Ovary (tissue), 10 donors: ENCODE measurements at regions of chr2 and their contacts with region 1.

Region 1: DNA sequence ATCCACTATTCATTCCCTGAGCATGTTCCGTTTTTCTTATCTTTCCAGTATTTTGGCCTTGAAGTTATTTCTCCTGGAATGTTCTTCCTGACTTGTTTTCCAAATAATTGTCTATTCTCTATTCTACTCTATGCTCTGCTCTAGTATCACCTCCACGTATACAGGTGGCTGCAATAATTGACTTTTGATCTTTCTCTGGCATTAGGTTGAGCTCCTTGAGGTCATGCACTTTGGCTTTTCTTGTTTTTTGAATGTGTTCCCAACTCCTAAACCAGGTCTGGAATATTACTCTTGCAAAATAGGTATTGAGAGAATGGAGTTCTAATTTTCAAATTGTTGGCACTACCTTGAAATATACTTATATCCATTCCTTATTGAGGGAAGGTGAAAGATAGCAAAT is 550.4 kb downstream of the CNTNAP5 start:
- DNase-seq: no peak
- H3K4me3 ChIP-seq: no peak overlapping the region
- H3K27ac ChIP-seq: no peak overlapping the region
- H3K4me1 ChIP-seq: no peaks in the 10 kb centered on the region
- H3K27me3 ChIP-seq: no peaks in the 10 kb centered on the region
- CTCF ChIP-seq: no peak
- EP300 ChIP-seq: no peak
- POLR2A ChIP-seq: no peak

Region 2: DNA sequence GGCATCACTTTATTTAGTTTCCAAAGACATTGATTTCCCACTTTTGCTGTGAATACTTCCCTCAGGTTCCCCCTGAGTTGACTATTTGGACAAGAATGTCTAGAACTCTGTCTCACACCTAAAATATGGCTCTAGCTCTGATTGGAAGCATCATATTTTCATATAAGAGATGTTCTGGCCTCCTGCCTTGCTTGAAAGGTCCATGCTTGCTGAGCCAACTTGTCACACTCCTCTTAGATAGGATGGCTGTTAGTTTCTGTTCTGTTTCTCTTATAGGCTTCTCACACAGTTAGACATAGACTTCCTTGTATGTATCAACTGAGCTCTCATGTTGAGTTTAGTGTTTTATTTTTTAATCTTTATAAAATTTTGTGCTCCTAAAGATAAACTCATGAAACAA is 463.3 kb before region 1 on chr2:
- intact Hi-C with region 1: no loop called
- DNase-seq: no peak
- H3K4me3 ChIP-seq: no peak overlapping the region
- H3K27ac ChIP-seq: no peak overlapping the region
- H3K4me1 ChIP-seq: no peaks in the 10 kb centered on the region
- H3K27me3 ChIP-seq: no peaks in the 10 kb centered on the region
- CTCF ChIP-seq: no peak
- EP300 ChIP-seq: no peak
- POLR2A ChIP-seq: no peak

Region 3: GRCh38 chr2:124524155-124524915 is 51.2 kb before region 1 on chr2:
- intact Hi-C with region 1: no loop called
- DNase-seq: no peak
- H3K4me3 ChIP-seq: no peak overlapping the region
- H3K27ac ChIP-seq: no peak overlapping the region
- H3K4me1 ChIP-seq: no peaks in the 10 kb centered on the region
- H3K27me3 ChIP-seq: no peaks in the 10 kb centered on the region
- CTCF ChIP-seq: no peak
- EP300 ChIP-seq: no peak
- POLR2A ChIP-seq: no peak

Region 4: GRCh38 chr2:124542932-124543640 is 32.4 kb before region 1 on chr2:
- intact Hi-C with region 1: loop called in 1 of 4 experiments (anchors 1 kb)
- DNase-seq: no peak
- H3K4me3 ChIP-seq: no peak overlapping the region
- H3K27ac ChIP-seq: no peak overlapping the region
- H3K4me1 ChIP-seq: no peaks in the 10 kb centered on the region
- H3K27me3 ChIP-seq: no peaks in the 10 kb centered on the region
- CTCF ChIP-seq: no peak
- EP300 ChIP-seq: no peak
- POLR2A ChIP-seq: no peak

Region 5: DNA sequence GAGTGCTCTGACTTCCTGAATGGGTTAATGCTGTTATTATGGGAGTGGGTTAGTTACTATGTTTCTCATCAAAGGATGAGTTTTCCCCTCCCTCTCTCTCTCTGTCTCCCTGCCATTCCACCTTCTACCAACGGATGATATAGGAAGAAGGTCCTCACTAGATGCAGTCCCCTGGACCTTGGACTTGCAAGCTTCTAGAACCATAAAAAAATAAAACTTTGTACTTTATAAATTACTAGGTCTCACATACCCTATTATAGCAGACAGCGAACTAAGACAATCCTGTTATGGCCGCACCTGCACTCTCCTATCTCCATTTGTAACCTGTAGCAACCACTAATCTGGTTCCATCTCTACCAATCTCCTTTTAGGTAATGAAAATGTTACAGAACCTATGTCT is 14.5 kb after region 1 on chr2:
- intact Hi-C with region 1: no loop called
- DNase-seq: no peak
- H3K4me3 ChIP-seq: no peak overlapping the region
- H3K27ac ChIP-seq: no peak overlapping the region
- H3K4me1 ChIP-seq: no peaks in the 10 kb centered on the region
- H3K27me3 ChIP-seq: no peaks in the 10 kb centered on the region
- CTCF ChIP-seq: no peak
- EP300 ChIP-seq: no peak
- POLR2A ChIP-seq: no peak